Naive thymus-derived CD4-positive, alpha-beta T cell (primary cell): ENCODE measurements at regions of chr1 and their contacts with region 1.

Region 1: DNA sequence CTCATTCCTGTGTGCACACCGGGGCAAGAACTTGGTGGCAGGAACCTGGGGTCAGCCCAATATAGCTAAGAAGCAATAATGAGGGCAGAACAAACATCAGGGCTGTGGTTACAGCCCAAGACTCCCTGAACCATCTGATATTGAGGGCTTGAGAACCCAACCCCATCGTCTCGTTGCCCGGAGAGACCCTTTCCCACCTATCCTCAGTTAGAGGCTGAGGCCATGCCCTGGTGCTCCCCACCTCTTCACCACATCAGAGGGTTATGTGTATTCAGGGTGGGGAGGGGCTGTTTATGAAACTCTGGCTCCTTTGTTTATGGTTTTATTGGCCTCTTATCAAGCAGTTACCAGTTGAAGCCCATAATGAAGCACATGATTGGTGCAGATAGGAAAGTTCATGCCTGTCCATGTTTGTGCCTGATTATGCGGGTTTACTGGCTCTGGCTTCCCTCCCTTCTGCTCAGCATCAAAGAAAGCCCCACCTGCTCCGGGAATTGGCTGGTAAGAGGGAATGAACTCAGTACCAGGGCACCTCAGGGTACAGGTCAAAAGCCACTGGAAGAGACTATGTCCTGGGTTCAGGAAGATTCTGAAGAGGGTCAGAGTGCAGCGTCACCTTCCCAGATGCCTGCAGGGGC is 14.5 kb downstream of the NUAK2 start:
- DNase-seq: no peak
- ATAC-seq: no peak
- H3K4me3 ChIP-seq: no peak overlapping the region
- H3K4me3 Mint-ChIP-seq: no peak overlapping the region
- H3K27ac ChIP-seq: peak overlapping the region; percentile 34
- H3K27ac Mint-ChIP-seq: peak overlapping the region in 8 of 9 donors; percentile 65 to 87 (median 78)
- H3K4me1 ChIP-seq: peaks cover 9 to 40% of the 10 kb centered on the region in 2 donors
- H3K4me1 Mint-ChIP-seq: peaks cover 39 to 78% (median 72%) of the 10 kb centered on the region in 7 donors
- H3K27me3 ChIP-seq: no peaks in the 10 kb centered on the region
- H3K27me3 Mint-ChIP-seq: no peaks in the 10 kb centered on the region

Region 2: DNA sequence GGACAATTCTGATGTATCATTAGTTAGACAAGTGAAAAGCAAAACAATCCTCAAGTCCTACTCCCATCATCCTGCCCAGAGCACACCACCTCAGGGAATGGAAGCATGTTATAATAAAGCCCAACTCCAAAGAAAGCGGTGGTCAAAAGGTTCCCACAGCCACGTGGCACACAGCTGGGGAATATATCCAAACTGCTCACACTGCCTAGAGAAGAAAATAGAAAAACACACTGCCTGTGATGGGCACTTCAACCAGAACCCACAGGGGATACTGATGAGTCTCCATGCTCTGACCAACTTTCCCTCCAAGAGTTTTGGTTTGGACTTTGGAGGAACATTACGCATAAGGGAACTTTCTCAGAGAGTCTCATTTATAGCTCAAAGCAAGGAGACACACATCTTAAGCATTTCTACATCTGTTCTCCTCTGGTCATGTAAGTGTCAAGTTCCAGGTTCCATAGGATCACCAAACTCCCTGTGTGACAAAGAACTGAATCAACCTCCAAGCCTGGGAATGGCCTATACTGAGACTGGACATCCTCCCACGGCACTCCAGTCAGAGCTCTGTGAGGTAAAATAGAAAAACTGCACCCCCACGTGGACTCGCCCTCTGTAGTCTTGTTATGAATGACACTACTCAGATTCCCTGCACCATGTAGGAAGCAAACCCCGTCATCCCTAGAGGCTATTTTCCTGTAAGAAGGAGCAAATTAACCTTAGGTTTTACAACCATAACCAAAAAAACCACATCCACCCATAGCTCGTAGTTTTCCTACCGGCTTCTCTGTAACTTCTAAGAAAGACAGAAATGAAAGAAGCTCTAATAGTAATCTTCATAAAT is 107.7 kb before region 1 on chr1:
- CTCF ChIA-PET with region 1: no interaction called
- POLR2A ChIA-PET with region 1: no interaction called
- intact Hi-C with region 1: no loop called
- DNase-seq: peak in 4 of 9 donors; percentile 12 to 53 (median 16)
- ATAC-seq: peak; percentile 48
- H3K4me3 ChIP-seq: no peak overlapping the region
- H3K4me3 Mint-ChIP-seq: peak overlapping the region; percentile 38 to 72 (median 59)
- H3K27ac ChIP-seq: no peak overlapping the region
- H3K27ac Mint-ChIP-seq: peak overlapping the region in 8 of 9 donors; percentile 6 to 84 (median 39)
- H3K4me1 ChIP-seq: peaks cover 8 to 16% of the 10 kb centered on the region in 2 donors
- H3K4me1 Mint-ChIP-seq: peaks cover 37 to 67% (median 56%) of the 10 kb centered on the region in 7 donors
- H3K27me3 ChIP-seq: no peaks in the 10 kb centered on the region
- H3K27me3 Mint-ChIP-seq: no peaks in the 10 kb centered on the region

Region 3: DNA sequence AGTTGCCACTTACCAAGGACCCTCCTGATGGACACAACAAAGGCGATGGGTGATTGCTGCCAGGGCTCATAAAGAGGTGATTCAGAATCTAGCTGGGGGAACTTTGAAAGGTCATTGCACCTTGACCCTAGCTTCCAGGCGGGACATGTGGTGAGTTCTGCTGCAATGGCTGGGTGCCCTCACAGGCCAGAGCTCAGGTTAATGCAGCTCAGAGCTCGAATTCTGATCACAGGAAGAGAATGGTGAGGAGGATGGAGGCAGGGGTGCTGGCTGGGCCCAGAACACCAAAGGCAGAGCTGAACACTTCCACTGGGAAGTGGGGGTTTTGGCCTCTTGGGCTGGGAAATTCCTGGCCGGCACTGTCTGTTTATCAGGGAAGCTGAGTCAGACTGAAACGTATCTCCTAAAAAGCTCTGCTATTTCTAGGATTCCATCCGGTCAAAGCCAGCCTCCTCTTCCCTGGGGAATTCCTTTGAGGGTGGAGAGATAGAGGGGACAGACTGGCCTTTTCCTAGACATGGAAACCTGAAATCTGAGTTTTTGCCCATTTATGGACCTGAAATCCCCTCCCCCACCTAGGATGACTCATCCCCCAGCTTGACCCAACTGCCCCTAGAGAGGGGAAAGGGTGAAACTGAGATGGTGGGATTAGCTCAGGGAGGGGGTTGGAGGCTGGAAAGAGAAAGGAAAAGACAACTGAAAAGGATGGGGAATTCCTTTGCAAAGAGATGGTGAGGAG is 12.7 kb before region 1 on chr1:
- CTCF ChIA-PET with region 1: interaction called, 955 read pairs
- POLR2A ChIA-PET with region 1: interaction called, 1,119 read pairs
- intact Hi-C with region 1: no loop called
- DNase-seq: no peak
- ATAC-seq: no peak
- H3K4me3 ChIP-seq: no peak overlapping the region
- H3K4me3 Mint-ChIP-seq: peak overlapping the region in 4 of 10 donors; percentile 10 to 51 (median 30)
- H3K27ac ChIP-seq: no peak overlapping the region
- H3K27ac Mint-ChIP-seq: peak overlapping the region in 8 of 9 donors; percentile 42 to 96 (median 76)
- H3K4me1 ChIP-seq: peaks cover 12 to 41% of the 10 kb centered on the region in 2 donors
- H3K4me1 Mint-ChIP-seq: peaks cover 40 to 93% (median 84%) of the 10 kb centered on the region in 7 donors
- H3K27me3 ChIP-seq: no peaks in the 10 kb centered on the region
- H3K27me3 Mint-ChIP-seq: peaks cover 0 to 7% (median 0%) of the 10 kb centered on the region in 5 donors